Breast epithelium (tissue), 4 donors: ENCODE measurements at regions of chr12 and their contacts with region 1.

Region 1: GRCh38 chr12:90959538-90960139 is 4.7 kb upstream of the CCER1 start:
- DNase-seq: no peak
- H3K4me3 ChIP-seq: no peak overlapping the region
- H3K27ac ChIP-seq: no peak overlapping the region
- H3K4me1 ChIP-seq: no peaks in the 10 kb centered on the region
- H3K27me3 ChIP-seq: no peaks in the 10 kb centered on the region
- CTCF ChIP-seq: peak; percentile 46 to 73 (median 60)
- POLR2A ChIP-seq: no peak

Region 2: GRCh38 chr12:90945070-90945649 is 14.5 kb before region 1 on chr12:
- intact Hi-C with region 1: no loop called
- DNase-seq: no peak
- H3K4me3 ChIP-seq: no peak overlapping the region
- H3K27ac ChIP-seq: no peak overlapping the region
- H3K4me1 ChIP-seq: no peaks in the 10 kb centered on the region
- H3K27me3 ChIP-seq: no peaks in the 10 kb centered on the region
- CTCF ChIP-seq: peak in 2 of 3 donors; percentile 21 to 22
- POLR2A ChIP-seq: no peak

Region 3: GRCh38 chr12:90999966-91000365 is 40.3 kb after region 1 on chr12:
- intact Hi-C with region 1: loop called (anchors 2 kb)
- DNase-seq: no peak
- H3K4me3 ChIP-seq: no peak overlapping the region
- H3K27ac ChIP-seq: no peak overlapping the region
- H3K4me1 ChIP-seq: no peaks in the 10 kb centered on the region
- H3K27me3 ChIP-seq: no peaks in the 10 kb centered on the region
- CTCF ChIP-seq: no peak
- POLR2A ChIP-seq: no peak